Pancreas (tissue), 10 donors: ENCODE measurements at regions of chr15 and their contacts with region 1.

Region 1: GRCh38 chr15:29749365-29750086 is 72.7 kb downstream of the TJP1 start:
- DNase-seq: no peak
- ATAC-seq: peak in 2 of 4 donors; percentile 19 to 28
- H3K4me3 ChIP-seq: no peak overlapping the region
- H3K27ac ChIP-seq: no peak overlapping the region
- H3K4me1 ChIP-seq: no peaks in the 10 kb centered on the region
- H3K27me3 ChIP-seq: no peaks in the 10 kb centered on the region
- CTCF ChIP-seq: no peak

Region 2: GRCh38 chr15:29805043-29805707 is 55.6 kb after region 1 on chr15:
- intact Hi-C with region 1: loop called in 1 of 3 experiments (anchors 10 kb)
- DNase-seq: peak in 2 of 6 donors; percentile 21 to 50
- ATAC-seq: peak; percentile 67 to 95 (median 90)
- H3K4me3 ChIP-seq: no peak overlapping the region
- H3K27ac ChIP-seq: peak overlapping the region in 2 of 4 donors; percentile 16 to 24
- H3K4me1 ChIP-seq: peaks cover 11 to 40% (median 32%) of the 10 kb centered on the region in 3 donors
- H3K27me3 ChIP-seq: no peaks in the 10 kb centered on the region
- CTCF ChIP-seq: no peak

Region 3: DNA sequence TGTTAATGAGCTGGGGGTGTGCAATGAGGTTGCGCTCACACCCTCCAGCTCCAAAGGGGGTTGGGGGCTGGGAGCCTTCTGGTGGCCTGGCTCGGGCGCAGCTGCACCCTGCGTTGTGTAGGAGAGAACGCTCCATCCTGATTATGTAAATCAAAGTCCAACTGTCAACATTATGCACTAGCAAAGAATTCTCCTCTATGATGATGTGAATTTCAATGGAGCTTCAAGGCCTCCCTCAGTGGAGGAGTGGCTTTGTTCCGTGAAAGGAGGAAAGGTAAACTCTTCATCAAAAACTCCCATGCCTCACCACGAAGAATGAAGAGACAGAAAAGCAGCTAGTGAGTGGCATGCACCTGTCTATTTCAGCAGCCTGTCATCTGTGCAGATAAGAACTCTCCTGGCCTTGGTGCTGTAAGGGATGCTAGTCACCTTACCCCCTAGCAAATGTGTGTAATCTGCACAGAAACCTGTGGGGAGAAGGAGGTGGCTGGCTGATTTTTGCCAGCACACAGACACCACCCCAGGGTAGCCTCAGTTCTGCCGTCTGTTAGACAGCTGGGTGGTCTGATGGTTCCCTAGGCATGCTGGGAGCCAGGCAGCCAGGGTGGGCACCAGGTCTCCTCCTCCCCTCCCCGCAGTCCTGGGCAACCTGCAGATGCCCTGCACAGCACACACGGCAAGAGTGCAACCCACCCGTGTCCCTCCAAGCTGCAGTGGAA is 1398.9 kb after region 1 on chr15:
- intact Hi-C with region 1: no loop called
- DNase-seq: peak in 1 of 6 donors; percentile 39
- ATAC-seq: no peak
- H3K4me3 ChIP-seq: no peak overlapping the region
- H3K27ac ChIP-seq: no peak overlapping the region
- H3K4me1 ChIP-seq: no peaks in the 10 kb centered on the region
- H3K27me3 ChIP-seq: no peaks in the 10 kb centered on the region
- CTCF ChIP-seq: no peak